Caco-2 (cell line): ENCODE measurements at regions of chr2 and their contacts with region 1.

Region 1: DNA sequence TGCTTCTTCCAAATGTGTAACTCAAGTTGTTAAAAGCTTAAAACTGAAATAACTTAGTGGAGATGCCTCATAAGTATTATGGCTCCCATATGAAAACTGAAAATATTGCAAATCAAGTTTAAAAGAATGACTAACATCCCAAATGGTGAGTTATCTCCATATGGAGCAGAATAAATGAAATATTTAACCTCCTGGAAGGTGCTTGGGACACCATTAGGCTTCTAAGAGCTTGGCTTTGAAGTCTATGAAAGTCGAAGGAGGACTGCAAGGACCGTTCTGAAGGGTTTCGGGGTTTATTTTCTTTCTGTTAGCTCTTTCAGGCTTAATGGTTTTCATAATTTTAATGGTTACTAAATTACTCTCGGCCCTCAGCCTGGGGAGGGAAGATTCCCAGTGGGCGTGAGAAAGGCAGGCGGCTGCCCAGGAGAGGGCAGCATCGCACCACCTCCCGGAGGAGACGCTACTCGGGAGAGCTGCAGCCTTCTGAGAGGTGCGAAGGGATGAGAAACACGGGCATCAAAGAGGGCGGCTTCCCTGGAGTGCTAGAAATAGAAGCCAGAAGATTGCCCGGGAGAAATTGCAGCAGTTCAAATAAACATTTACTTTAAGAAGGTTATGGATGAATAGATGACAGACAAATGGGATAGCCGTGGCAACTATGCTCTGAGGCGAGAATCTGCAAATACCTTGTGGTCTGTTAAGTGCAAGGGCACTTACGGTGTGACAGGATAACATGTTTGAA is 43.1 kb downstream of the MAP3K19 start:
- DNase-seq: peak; percentile 78 to 84
- H3K4me3 ChIP-seq: no peak overlapping the region
- H3K4me3 Mint-ChIP-seq: no peak overlapping the region
- H3K27ac Mint-ChIP-seq: no peak overlapping the region
- H3K4me1 ChIP-seq: no peaks in the 10 kb centered on the region
- H3K4me1 Mint-ChIP-seq: no peaks in the 10 kb centered on the region
- H3K27me3 ChIP-seq: no peaks in the 10 kb centered on the region
- H3K27me3 Mint-ChIP-seq: peaks cover 7% of the 10 kb centered on the region
- CTCF ChIP-seq: peak; percentile 93 to 98

Region 2: GRCh38 chr2:134988994-134989605 is 15.1 kb before region 1 on chr2:
- CTCF ChIA-PET with region 1: interaction called, 10 read pairs
- POLR2A ChIA-PET with region 1: no interaction called
- intact Hi-C with region 1: no loop called
- DNase-seq: peak in 1 of 2 experiments; percentile 7
- H3K4me3 ChIP-seq: no peak overlapping the region
- H3K4me3 Mint-ChIP-seq: no peak overlapping the region
- H3K27ac Mint-ChIP-seq: no peak overlapping the region
- H3K4me1 ChIP-seq: no peaks in the 10 kb centered on the region
- H3K4me1 Mint-ChIP-seq: no peaks in the 10 kb centered on the region
- H3K27me3 ChIP-seq: no peaks in the 10 kb centered on the region
- H3K27me3 Mint-ChIP-seq: peaks cover 16% of the 10 kb centered on the region
- CTCF ChIP-seq: peak; percentile 40 to 53

Region 3: GRCh38 chr2:135021618-135022017 is 17.4 kb after region 1 on chr2:
- CTCF ChIA-PET with region 1: no interaction called
- POLR2A ChIA-PET with region 1: no interaction called
- intact Hi-C with region 1: no loop called
- DNase-seq: no peak
- H3K4me3 ChIP-seq: no peak overlapping the region
- H3K4me3 Mint-ChIP-seq: no peak overlapping the region
- H3K27ac Mint-ChIP-seq: no peak overlapping the region
- H3K4me1 ChIP-seq: no peaks in the 10 kb centered on the region
- H3K4me1 Mint-ChIP-seq: no peaks in the 10 kb centered on the region
- H3K27me3 ChIP-seq: no peaks in the 10 kb centered on the region
- H3K27me3 Mint-ChIP-seq: peaks cover 11% of the 10 kb centered on the region
- CTCF ChIP-seq: no peak

Region 4: DNA sequence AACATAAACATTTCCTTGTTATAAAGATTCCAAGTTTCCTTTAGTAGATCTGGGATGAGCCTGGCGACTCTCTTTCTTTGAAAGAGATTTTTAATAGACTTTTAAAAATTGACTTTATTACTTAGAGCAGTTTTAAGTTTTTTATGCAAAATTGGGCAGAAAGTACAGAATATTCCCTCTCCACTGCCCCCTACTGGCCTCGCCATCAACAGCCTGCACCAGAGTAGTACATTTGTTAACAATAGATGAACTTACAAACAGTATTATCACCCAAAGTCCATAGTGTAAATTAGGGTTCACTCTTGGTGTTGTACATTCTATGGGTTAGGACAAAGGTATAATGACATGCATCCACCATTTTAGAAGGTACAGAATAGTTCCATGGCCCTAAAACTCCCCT is 39.2 kb after region 1 on chr2:
- CTCF ChIA-PET with region 1: no interaction called
- POLR2A ChIA-PET with region 1: no interaction called
- intact Hi-C with region 1: no loop called
- DNase-seq: no peak
- H3K4me3 ChIP-seq: no peak overlapping the region
- H3K4me3 Mint-ChIP-seq: no peak overlapping the region
- H3K27ac Mint-ChIP-seq: no peak overlapping the region
- H3K4me1 ChIP-seq: no peaks in the 10 kb centered on the region
- H3K4me1 Mint-ChIP-seq: peaks cover 9% of the 10 kb centered on the region
- H3K27me3 ChIP-seq: no peaks in the 10 kb centered on the region
- H3K27me3 Mint-ChIP-seq: no peaks in the 10 kb centered on the region
- CTCF ChIP-seq: peak in 1 of 2 experiments; percentile 30

Region 5: DNA sequence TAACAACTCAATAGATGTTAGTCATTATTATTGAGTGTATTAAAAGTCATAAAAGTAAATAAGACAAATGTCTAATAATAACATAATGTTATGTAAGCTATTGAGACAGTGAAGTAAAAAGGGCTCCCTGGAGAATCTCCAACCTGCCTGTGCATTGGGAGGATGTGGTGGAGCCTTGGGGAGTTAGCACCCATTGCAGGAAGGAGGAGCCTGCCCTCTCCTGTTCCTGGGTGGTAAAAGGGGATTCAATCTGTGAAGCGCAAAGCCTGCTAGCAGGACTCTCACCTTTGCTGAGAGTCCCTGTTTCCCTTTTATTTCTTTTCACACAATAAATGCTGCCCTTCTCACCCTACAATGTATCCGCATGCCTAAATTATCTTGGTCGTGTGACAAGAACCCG is 254.0 kb after region 1 on chr2:
- CTCF ChIA-PET with region 1: no interaction called
- POLR2A ChIA-PET with region 1: no interaction called
- intact Hi-C with region 1: loop called (anchors 1 kb)
- DNase-seq: peak in 1 of 2 experiments; percentile 34
- H3K4me3 ChIP-seq: no peak overlapping the region
- H3K4me3 Mint-ChIP-seq: no peak overlapping the region
- H3K27ac Mint-ChIP-seq: no peak overlapping the region
- H3K4me1 ChIP-seq: no peaks in the 10 kb centered on the region
- H3K4me1 Mint-ChIP-seq: no peaks in the 10 kb centered on the region
- H3K27me3 ChIP-seq: no peaks in the 10 kb centered on the region
- H3K27me3 Mint-ChIP-seq: no peaks in the 10 kb centered on the region
- CTCF ChIP-seq: peak in 1 of 2 experiments; percentile 38

Region 6: GRCh38 chr2:135531231-135532228 is 527.4 kb after region 1 on chr2 and contains the start of gene R3HDM1:
- CTCF ChIA-PET with region 1: interaction called, 4 read pairs
- POLR2A ChIA-PET with region 1: no interaction called
- intact Hi-C with region 1: loop called (anchors 5 kb)
- DNase-seq: peak; percentile 98 to 99
- H3K4me3 ChIP-seq: peak within 1 kb of the TSS; percentile 86
- H3K4me3 Mint-ChIP-seq: no peak within 1 kb of the TSS
- H3K27ac Mint-ChIP-seq: peak within 1 kb of the TSS; percentile 45
- H3K4me1 ChIP-seq: peaks cover 7% of the 10 kb centered on the region; the same call in 1 of the 2 replicates
- H3K4me1 Mint-ChIP-seq: peaks cover 6% of the 10 kb centered on the region
- H3K27me3 ChIP-seq: no peaks in the 10 kb centered on the region
- H3K27me3 Mint-ChIP-seq: no peaks in the 10 kb centered on the region
- CTCF ChIP-seq: peak; percentile 23 to 39
- total RNA-seq, gene R3HDM1: 44.4 and 45.3 TPM in 2 replicates

Region 7: GRCh38 chr2:135709992-135710391 is 705.8 kb after region 1 on chr2:
- CTCF ChIA-PET with region 1: interaction called, 17 read pairs
- POLR2A ChIA-PET with region 1: no interaction called
- intact Hi-C with region 1: loop called (anchors 1 kb)
- DNase-seq: peak; percentile 54 to 75
- H3K4me3 ChIP-seq: no peak overlapping the region
- H3K4me3 Mint-ChIP-seq: no peak overlapping the region
- H3K27ac Mint-ChIP-seq: no peak overlapping the region
- H3K4me1 ChIP-seq: no peaks in the 10 kb centered on the region
- H3K4me1 Mint-ChIP-seq: no peaks in the 10 kb centered on the region
- H3K27me3 ChIP-seq: no peaks in the 10 kb centered on the region
- H3K27me3 Mint-ChIP-seq: no peaks in the 10 kb centered on the region
- CTCF ChIP-seq: peak; percentile 94 to 96